CD4-positive, alpha-beta memory T cell (primary cell): ENCODE measurements at regions of chr11 and their contacts with region 1.

Region 1: GRCh38 chr11:67583247-67584204 is at the start of gene GSTP1:
- DNase-seq: peak; percentile 62 to 82 (median 71)
- H3K4me3 ChIP-seq: peak within 1 kb of the TSS; percentile 6 to 54
- H3K4me3 Mint-ChIP-seq: peak within 1 kb of the TSS; percentile 88 to 94 (median 92)
- H3K27ac ChIP-seq: peak within 1 kb of the TSS; percentile 65
- H3K27ac Mint-ChIP-seq: peak within 1 kb of the TSS; percentile 79 to 96 (median 93)
- H3K4me1 ChIP-seq: peaks cover 20% of the 10 kb centered on the region
- H3K4me1 Mint-ChIP-seq: peaks cover 21 to 45% (median 33%) of the 10 kb centered on the region in 4 donors
- H3K27me3 ChIP-seq: no peaks in the 10 kb centered on the region
- H3K27me3 Mint-ChIP-seq: no peaks in the 10 kb centered on the region
- total RNA-seq, gene GSTP1: 134 to 143 TPM

Region 2: GRCh38 chr11:67606492-67607201 is 23.1 kb after region 1 on chr11 and contains the start of gene NDUFV1:
- CTCF ChIA-PET with region 1: no interaction called
- POLR2A ChIA-PET with region 1: interaction called, 8 read pairs
- intact Hi-C with region 1: loop called (anchors 1 kb)
- DNase-seq: peak; percentile 94 to 96 (median 94)
- H3K4me3 ChIP-seq: peak within 1 kb of the TSS; percentile 38 to 86
- H3K4me3 Mint-ChIP-seq: peak within 1 kb of the TSS; percentile 86 to 97 (median 92)
- H3K27ac ChIP-seq: peak within 1 kb of the TSS; percentile 83
- H3K27ac Mint-ChIP-seq: peak within 1 kb of the TSS; percentile 76 to 97 (median 93)
- H3K4me1 ChIP-seq: peaks cover 13% of the 10 kb centered on the region
- H3K4me1 Mint-ChIP-seq: peaks cover 4 to 27% (median 9%) of the 10 kb centered on the region in 4 donors
- H3K27me3 ChIP-seq: no peaks in the 10 kb centered on the region
- H3K27me3 Mint-ChIP-seq: peaks cover 2 to 6% of the 10 kb centered on the region in 2 donors
- total RNA-seq, gene NDUFV1: 204 to 212 TPM

Region 3: DNA sequence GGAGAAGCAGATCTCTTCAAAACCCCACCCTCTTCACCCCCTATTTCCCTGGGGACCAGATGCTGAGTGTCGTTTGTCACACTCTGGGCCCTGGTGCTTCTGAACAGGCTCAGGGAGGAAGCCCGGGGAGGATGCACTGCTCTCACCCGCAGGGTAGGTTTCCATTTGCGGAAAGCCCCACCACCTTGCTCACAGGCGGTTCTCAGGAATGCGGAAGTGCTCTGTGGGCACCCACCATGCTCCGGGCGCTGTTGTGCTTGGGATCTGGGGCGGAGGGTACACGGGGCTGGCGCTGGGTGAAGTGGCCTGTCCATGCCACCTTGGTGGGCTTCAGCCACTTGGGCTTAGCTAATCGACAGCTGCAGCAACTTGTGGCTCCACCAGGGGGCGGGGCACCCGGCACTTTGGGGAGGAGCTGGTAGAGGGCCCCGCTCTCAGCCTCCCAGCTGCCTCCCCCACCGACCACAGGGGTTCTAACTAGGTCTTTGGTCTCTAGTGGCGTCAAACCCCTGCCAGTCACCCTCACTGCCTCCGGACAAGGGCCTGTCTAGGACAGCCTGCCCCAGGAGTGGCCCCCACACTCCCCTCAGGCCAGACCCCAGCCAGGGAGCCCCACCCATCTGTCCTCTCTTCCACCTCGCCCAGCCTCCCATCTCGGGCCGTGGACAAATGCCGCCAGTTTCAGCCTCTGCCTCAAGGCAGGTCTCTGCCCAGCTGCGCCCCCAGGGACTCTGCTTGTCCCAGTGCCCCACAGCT is 30.6 kb after region 1 on chr11:
- CTCF ChIA-PET with region 1: interaction called, 3 read pairs
- POLR2A ChIA-PET with region 1: interaction called, 22 read pairs
- intact Hi-C with region 1: no loop called
- DNase-seq: peak; percentile 84 to 94 (median 88)
- H3K4me3 ChIP-seq: peak overlapping the region; percentile 57 to 59
- H3K4me3 Mint-ChIP-seq: peak overlapping the region; percentile 80 to 88 (median 85)
- H3K27ac ChIP-seq: peak overlapping the region; percentile 94
- H3K27ac Mint-ChIP-seq: peak overlapping the region; percentile 97 to 99 (median 98)
- H3K4me1 ChIP-seq: peaks cover 33% of the 10 kb centered on the region
- H3K4me1 Mint-ChIP-seq: peaks cover 13 to 37% (median 20%) of the 10 kb centered on the region in 4 donors
- H3K27me3 ChIP-seq: no peaks in the 10 kb centered on the region
- H3K27me3 Mint-ChIP-seq: peaks cover 0 to 2% of the 10 kb centered on the region in 2 donors